IMR-90 (cell line): ENCODE measurements at regions of chr7 and their contacts with region 1.

Region 1: DNA sequence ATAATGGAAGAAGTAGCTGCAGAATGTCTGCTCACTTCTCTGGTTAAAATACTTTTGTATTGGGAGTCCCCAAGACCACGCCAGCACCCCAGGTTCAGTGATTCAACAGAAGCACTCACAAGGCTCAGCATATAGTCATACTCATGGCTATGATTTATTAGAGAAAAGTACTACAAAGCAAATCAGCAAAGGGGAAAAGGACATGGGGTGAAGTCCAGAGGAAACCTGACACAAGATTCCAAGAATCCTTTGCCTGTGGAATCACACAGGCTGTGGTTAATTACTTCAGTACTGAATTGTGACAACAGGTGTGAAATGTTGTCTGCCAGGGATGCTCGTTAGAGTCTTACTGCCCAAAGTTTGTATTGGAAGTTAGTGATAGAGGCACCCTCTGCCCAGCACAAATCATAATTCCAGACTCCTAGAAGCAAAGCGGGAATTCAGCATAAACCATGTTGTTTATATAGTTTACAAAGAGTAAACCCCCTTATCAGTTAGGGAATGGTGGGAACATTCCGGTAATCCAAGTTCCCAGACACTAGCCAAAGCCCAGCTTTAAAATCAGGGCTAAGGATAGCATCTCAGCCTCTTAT is 79.4 kb downstream of the HYCC1 start:
- DNase-seq: peak; percentile 69
- ATAC-seq: peak; percentile 56
- H3K4me3 ChIP-seq: no peak overlapping the region
- H3K27ac ChIP-seq: peak overlapping the region; percentile 29; the same call in 1 of the 2 replicates
- H3K4me1 ChIP-seq: peaks cover 8% of the 10 kb centered on the region
- H3K27me3 ChIP-seq: no peaks in the 10 kb centered on the region
- CTCF ChIP-seq: no peak
- POLR2A ChIP-seq: no peak
- RAD21 ChIP-seq: no peak

Region 2: GRCh38 chr7:22867003-22867402 is 67.6 kb before region 1 on chr7:
- CTCF ChIA-PET with region 1: no interaction called
- POLR2A ChIA-PET with region 1: no interaction called
- dilution Hi-C with region 1: no loop called
- in situ Hi-C with region 1: no loop called
- intact Hi-C with region 1: loop called (anchors 5 kb)
- DNase-seq: peak; percentile 89
- ATAC-seq: peak; percentile 47
- H3K4me3 ChIP-seq: no peak overlapping the region
- H3K27ac ChIP-seq: peak overlapping the region; percentile 100; the same call in 1 of the 2 replicates
- H3K4me1 ChIP-seq: peaks cover 25% of the 10 kb centered on the region
- H3K27me3 ChIP-seq: no peaks in the 10 kb centered on the region
- CTCF ChIP-seq: no peak
- POLR2A ChIP-seq: no peak
- RAD21 ChIP-seq: no peak